CD8-positive, alpha-beta memory T cell (primary cell): ENCODE measurements at regions of chr1 and their contacts with region 1.

Region 1: GRCh38 chr1:145891587-145892485 is 6.2 kb upstream of the ANKRD35 start:
- DNase-seq: peak in 4 of 5 donors; percentile 6 to 59 (median 32)
- H3K4me3 ChIP-seq: no peak overlapping the region
- H3K4me3 Mint-ChIP-seq: no peak overlapping the region
- H3K27ac ChIP-seq: no peak overlapping the region
- H3K27ac Mint-ChIP-seq: peak overlapping the region in 1 of 8 donors; percentile 83
- H3K4me1 ChIP-seq: no peaks in the 10 kb centered on the region
- H3K4me1 Mint-ChIP-seq: peaks cover 0 to 1% (median under 1%) of the 10 kb centered on the region in 3 donors
- H3K27me3 ChIP-seq: no peaks in the 10 kb centered on the region
- H3K27me3 Mint-ChIP-seq: no peaks in the 10 kb centered on the region

Region 2: DNA sequence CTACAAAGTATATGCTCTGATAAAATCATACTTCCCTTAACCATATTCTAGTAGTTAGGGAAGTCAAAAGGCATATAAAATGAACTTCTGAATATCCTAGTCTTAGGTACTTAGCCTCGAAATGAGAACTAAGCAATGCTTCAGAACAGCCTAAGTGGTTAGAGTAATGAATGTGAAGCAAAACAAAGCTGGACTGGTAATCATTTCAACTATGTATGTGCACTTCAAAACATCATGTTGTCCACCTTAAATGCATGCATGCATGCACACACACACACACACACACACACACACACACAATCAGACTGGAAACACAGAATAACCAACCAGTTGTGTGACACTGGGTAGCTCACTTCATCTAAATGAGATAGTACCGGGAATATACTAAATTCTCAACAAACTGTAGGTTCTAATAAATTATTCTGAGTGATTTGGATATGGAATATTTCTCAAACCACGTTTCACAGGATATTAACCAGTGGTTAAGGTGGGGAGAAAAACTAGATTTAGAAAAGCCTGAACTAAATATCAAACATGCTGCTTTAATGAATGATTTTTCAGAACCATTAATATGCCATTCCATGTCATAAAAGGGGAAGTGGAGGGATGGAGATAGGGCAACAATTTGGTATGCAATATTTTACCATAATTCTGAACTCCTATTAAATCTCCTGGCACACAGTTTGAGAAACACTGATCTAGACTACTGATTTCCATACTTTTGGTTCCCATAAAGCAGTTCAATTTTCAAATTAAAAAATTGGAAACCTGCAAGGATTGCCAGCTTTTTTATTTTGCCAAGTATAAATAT is 87.4 kb before region 1 on chr1:
- CTCF ChIA-PET with region 1: no interaction called
- POLR2A ChIA-PET with region 1: no interaction called
- DNase-seq: no peak
- H3K4me3 ChIP-seq: no peak overlapping the region
- H3K4me3 Mint-ChIP-seq: no peak overlapping the region
- H3K27ac ChIP-seq: no peak overlapping the region
- H3K27ac Mint-ChIP-seq: peak overlapping the region in 2 of 8 donors; percentile 48 to 70
- H3K4me1 ChIP-seq: peaks cover 10% of the 10 kb centered on the region
- H3K4me1 Mint-ChIP-seq: peaks cover 52 to 75% (median 71%) of the 10 kb centered on the region in 3 donors
- H3K27me3 ChIP-seq: no peaks in the 10 kb centered on the region
- H3K27me3 Mint-ChIP-seq: peaks cover 0 to 2% of the 10 kb centered on the region in 2 donors

Region 3: DNA sequence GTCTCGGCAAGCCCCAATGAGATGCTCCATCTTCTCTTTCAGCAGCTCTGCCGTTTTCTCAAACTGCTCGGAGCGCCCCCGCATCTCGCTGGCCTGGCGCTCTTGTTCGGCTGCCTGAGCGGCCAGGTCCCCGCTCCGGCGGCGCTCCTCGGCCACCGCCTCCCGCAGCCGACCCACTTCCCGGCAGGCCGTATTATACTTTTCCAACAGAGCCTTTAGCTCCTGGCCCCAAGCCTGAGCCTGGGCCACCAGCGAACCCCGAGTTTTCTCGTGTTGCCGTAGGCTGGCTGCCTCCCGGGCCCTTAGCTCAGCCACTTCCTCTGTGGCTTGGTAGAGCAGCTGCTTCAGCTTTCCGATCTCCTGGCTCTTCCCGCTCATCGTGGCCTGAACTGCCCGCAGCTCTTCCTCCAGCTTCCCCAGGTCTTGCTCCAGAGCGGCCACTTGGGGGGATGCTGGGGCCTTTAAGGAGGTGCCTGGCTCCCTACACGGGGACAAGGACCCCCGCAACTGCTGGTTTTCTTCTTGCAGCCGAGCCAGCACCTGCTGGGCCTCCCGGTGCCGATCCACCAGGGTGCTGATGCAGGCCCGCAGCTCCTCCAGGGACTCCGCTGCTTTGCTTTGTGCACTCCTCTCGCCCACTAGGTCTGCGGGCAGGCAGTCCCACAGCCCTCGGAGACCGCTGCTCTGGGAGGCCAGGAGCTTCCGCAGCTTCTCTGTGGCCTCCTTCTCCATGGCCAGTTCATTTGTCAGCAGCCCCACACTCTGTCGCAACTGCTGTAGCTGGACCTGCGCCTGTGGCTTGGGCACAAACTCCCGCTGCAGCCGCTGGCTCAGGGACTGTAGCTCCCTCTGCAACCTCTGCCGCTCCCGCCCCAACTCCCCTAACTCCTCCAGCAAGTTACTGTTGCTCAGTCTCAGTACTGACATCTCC is 19.6 kb before region 1 on chr1:
- CTCF ChIA-PET with region 1: interaction called, 12 read pairs
- POLR2A ChIA-PET with region 1: no interaction called
- DNase-seq: peak in 4 of 5 donors; percentile 6 to 56 (median 40)
- H3K4me3 ChIP-seq: peak overlapping the region; percentile 51
- H3K4me3 Mint-ChIP-seq: peak overlapping the region; percentile 74 to 93 (median 84)
- H3K27ac ChIP-seq: no peak overlapping the region
- H3K27ac Mint-ChIP-seq: peak overlapping the region; percentile 9 to 93 (median 82)
- H3K4me1 ChIP-seq: peaks cover 12% of the 10 kb centered on the region
- H3K4me1 Mint-ChIP-seq: peaks cover 16 to 24% (median 21%) of the 10 kb centered on the region in 3 donors
- H3K27me3 ChIP-seq: no peaks in the 10 kb centered on the region
- H3K27me3 Mint-ChIP-seq: peaks cover 4 to 13% of the 10 kb centered on the region in 2 donors

Region 4: GRCh38 chr1:145906954-145907753 is 15.3 kb after region 1 on chr1:
- CTCF ChIA-PET with region 1: interaction called, 15 read pairs
- POLR2A ChIA-PET with region 1: no interaction called
- DNase-seq: no peak
- H3K4me3 ChIP-seq: no peak overlapping the region
- H3K4me3 Mint-ChIP-seq: no peak overlapping the region
- H3K27ac ChIP-seq: no peak overlapping the region
- H3K27ac Mint-ChIP-seq: no peak overlapping the region
- H3K4me1 ChIP-seq: no peaks in the 10 kb centered on the region
- H3K4me1 Mint-ChIP-seq: peaks cover 4 to 11% (median 6%) of the 10 kb centered on the region in 3 donors
- H3K27me3 ChIP-seq: no peaks in the 10 kb centered on the region
- H3K27me3 Mint-ChIP-seq: peaks cover 0 to 3% of the 10 kb centered on the region in 2 donors

Region 5: DNA sequence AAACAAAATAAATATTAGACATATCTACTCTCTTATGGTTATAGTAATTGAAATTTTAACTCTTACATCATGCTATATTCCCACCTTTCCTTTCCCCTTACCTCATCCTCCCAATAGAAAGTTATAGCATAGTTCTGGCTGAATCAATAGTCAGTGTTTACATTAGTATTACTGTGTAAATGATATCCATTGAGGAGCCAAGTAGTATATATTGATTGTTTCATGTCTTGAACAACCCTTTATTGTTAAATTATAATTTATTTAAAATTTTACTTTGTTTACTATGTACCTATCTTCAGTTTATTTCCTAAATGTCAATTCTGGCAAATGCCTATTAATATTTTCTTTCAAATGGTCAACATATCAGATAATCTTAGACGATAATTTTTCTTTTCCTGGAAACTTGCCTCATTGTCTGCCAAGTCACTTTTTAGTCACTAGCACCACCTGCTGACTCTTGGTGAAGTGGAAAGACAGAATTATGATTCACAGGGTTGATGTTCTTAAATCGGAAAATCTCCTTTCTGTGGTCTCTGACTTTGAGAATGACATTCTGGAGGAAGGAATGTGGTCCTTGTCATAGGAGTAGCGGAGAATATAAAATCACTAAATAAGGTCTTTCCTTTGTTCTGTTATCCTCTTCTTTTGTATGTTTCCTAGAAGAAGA is 121.0 kb after region 1 on chr1:
- CTCF ChIA-PET with region 1: interaction called, 10 read pairs
- POLR2A ChIA-PET with region 1: no interaction called
- DNase-seq: peak; percentile 24 to 64 (median 59)
- H3K4me3 ChIP-seq: no peak overlapping the region
- H3K4me3 Mint-ChIP-seq: no peak overlapping the region
- H3K27ac ChIP-seq: no peak overlapping the region
- H3K27ac Mint-ChIP-seq: no peak overlapping the region
- H3K4me1 ChIP-seq: no peaks in the 10 kb centered on the region
- H3K4me1 Mint-ChIP-seq: peaks cover 4 to 12% (median 11%) of the 10 kb centered on the region in 3 donors
- H3K27me3 ChIP-seq: no peaks in the 10 kb centered on the region
- H3K27me3 Mint-ChIP-seq: peaks cover 0 to 13% of the 10 kb centered on the region in 2 donors